Gastrocnemius medialis (tissue), 4 donors: ENCODE measurements at regions of chr9 and their contacts with region 1.

Region 1: GRCh38 chr9:102113191-102113590 is 374.7 kb upstream of the GRIN3A start:
- DNase-seq: no peak
- ATAC-seq: no peak
- H3K4me3 ChIP-seq: no peak overlapping the region
- H3K27ac ChIP-seq: no peak overlapping the region
- H3K4me1 ChIP-seq: no peaks in the 10 kb centered on the region
- H3K27me3 ChIP-seq: no peaks in the 10 kb centered on the region
- CTCF ChIP-seq: no peak
- POLR2A ChIP-seq: no peak

Region 2: DNA sequence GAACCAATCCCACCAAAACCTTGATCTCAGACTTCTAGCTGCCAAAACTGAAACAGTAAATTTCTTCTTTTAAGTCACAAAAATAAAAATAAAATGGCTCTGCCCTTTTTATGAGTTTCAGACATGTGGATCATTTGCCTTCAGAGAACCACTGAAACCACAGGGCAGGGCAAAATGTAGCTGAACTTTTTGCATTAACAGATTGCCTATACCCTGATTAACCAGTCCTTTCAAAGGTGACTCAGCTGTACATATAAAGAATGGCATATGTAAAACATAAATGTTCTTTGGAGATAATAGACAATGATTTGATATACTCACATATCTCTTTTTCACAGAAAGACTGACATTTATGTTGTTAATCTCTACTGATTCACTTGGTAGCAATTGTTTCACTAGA is 187.7 kb before region 1 on chr9:
- in situ Hi-C with region 1: no loop called
- intact Hi-C with region 1: no loop called
- DNase-seq: no peak
- ATAC-seq: no peak
- H3K4me3 ChIP-seq: no peak overlapping the region
- H3K27ac ChIP-seq: no peak overlapping the region
- H3K4me1 ChIP-seq: no peaks in the 10 kb centered on the region
- H3K27me3 ChIP-seq: no peaks in the 10 kb centered on the region
- CTCF ChIP-seq: no peak
- POLR2A ChIP-seq: no peak

Region 3: DNA sequence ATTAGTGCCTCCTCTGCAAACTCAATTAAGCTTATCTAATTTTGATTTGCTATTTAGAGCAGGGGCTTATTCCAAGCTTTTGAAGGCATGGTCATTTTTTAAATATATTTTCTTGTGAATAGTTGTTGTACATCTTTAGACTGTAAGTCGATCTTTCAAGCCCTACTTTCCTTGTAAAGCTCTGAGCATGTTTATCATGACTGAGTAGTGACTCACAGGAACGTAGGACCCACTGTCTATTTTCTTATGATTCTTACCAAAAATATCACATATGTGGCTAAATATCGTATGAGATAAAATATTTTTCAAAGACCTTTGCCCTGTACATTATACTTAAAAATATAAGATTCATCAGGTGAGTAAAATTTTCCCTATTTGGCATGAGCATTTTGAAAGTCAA is 65.6 kb after region 1 on chr9:
- in situ Hi-C with region 1: loop called in 1 of 4 experiments (anchors 10 kb)
- intact Hi-C with region 1: no loop called
- DNase-seq: no peak
- ATAC-seq: no peak
- H3K4me3 ChIP-seq: no peak overlapping the region
- H3K27ac ChIP-seq: no peak overlapping the region
- H3K4me1 ChIP-seq: no peaks in the 10 kb centered on the region
- H3K27me3 ChIP-seq: no peaks in the 10 kb centered on the region
- CTCF ChIP-seq: no peak
- POLR2A ChIP-seq: no peak